Activated CD4-positive, alpha-beta memory T cell treated with anti-CD3 and anti-CD28 coated beads for 36 hours (primary cell): ENCODE measurements at regions of chr18 and their contacts with region 1.

Region 1: GRCh38 chr18:32048507-32049091 is 30.0 kb downstream of the RNF125 start:
- DNase-seq: peak; percentile 45
- H3K4me3 Mint-ChIP-seq: no peak overlapping the region
- H3K27ac Mint-ChIP-seq: peak overlapping the region; percentile 91
- H3K4me1 Mint-ChIP-seq: peaks cover 39% of the 10 kb centered on the region
- H3K27me3 Mint-ChIP-seq: no peaks in the 10 kb centered on the region

Region 2: DNA sequence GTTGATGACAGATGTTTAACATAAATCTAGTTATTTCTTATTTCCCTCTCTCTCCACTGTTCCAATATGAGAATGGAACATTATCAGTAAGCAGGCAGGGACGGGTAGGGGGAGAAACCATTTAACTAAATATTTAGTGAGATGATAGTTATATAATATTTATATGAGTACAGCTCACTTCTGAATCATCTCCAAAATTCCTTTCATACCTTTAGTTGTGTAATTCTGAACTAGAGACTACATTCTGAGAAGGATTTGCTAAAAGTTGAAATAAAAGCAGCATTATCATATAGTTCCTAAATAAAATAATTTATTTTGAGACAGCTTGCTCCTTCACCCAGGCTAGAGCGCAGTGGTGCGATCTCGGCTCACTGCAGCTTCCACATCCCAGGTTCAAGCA is 405.6 kb before region 1 on chr18:
- CTCF ChIA-PET with region 1: no interaction called
- POLR2A ChIA-PET with region 1: no interaction called
- intact Hi-C with region 1: no loop called
- DNase-seq: no peak
- H3K4me3 Mint-ChIP-seq: no peak overlapping the region
- H3K27ac Mint-ChIP-seq: no peak overlapping the region
- H3K4me1 Mint-ChIP-seq: peaks cover 11% of the 10 kb centered on the region
- H3K27me3 Mint-ChIP-seq: peaks cover 4% of the 10 kb centered on the region

Region 3: GRCh38 chr18:32086861-32087260 is 38.3 kb after region 1 on chr18:
- CTCF ChIA-PET with region 1: no interaction called
- POLR2A ChIA-PET with region 1: interaction called, 9 read pairs
- intact Hi-C with region 1: loop called (anchors 1 kb)
- DNase-seq: no peak
- H3K4me3 Mint-ChIP-seq: no peak overlapping the region
- H3K27ac Mint-ChIP-seq: no peak overlapping the region
- H3K4me1 Mint-ChIP-seq: peaks cover 35% of the 10 kb centered on the region
- H3K27me3 Mint-ChIP-seq: no peaks in the 10 kb centered on the region

Region 4: GRCh38 chr18:32189790-32190189 is 141.2 kb after region 1 on chr18 and contains the start of gene MEP1B:
- CTCF ChIA-PET with region 1: no interaction called
- POLR2A ChIA-PET with region 1: no interaction called
- intact Hi-C with region 1: no loop called
- DNase-seq: no peak
- H3K4me3 Mint-ChIP-seq: no peak within 1 kb of the TSS
- H3K27ac Mint-ChIP-seq: no peak within 1 kb of the TSS
- H3K4me1 Mint-ChIP-seq: no peaks in the 10 kb centered on the region
- H3K27me3 Mint-ChIP-seq: peaks cover 11% of the 10 kb centered on the region
- total RNA-seq, gene MEP1B: 0.10 TPM in 1 of 2 experiments, not detected in the other